Left cardiac atrium (tissue), 4 donors: ENCODE measurements at regions of chr2 and their contacts with region 1.

Region 1: GRCh38 chr2:110812726-110813645 is 80.6 kb downstream of the ACOXL start:
- DNase-seq: no peak
- ATAC-seq: no peak

Region 2: DNA sequence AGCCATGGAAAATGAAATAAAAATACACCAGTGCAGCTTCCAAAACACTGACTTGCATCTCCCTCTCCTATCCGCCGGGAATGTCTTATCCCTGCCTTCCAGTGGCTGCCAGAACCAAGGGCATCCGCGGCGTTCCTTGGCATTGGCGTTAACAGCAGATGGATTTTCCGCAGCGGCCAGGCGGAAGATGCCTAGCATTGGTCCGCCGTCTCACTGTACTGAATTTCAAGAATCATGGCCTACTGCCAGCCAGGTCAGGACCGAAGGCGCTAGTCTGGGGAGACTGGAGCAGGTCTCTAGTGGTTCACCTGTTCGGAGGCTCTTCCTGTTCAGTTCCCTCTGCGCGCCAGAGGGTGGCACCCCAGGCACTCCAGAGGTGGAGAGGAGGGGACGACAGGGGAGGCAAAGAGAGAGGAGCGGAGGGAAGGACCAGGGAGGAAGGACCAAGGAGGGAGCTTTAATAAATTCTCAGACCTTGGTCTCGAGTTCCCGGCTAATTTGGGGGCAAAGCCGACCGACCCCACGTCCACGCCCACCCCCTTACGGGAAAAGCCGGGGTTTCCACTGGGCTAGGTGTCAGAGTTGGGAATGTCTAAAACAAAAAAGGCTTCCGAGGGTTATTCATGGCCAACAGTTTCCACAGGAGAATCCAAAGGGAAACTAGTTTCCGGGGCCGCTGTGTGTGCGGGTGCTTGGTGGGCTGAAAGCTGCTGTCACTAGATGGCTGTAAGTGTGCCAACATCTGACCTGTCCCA is 304.0 kb after region 1 on chr2:
- intact Hi-C with region 1: loop called in 1 of 2 experiments (anchors 5 kb)
- DNase-seq: peak; percentile 74
- ATAC-seq: peak; percentile 46 to 62